PC-9 (cell line): ENCODE measurements at regions of chr9 and their contacts with region 1.

Region 1: DNA sequence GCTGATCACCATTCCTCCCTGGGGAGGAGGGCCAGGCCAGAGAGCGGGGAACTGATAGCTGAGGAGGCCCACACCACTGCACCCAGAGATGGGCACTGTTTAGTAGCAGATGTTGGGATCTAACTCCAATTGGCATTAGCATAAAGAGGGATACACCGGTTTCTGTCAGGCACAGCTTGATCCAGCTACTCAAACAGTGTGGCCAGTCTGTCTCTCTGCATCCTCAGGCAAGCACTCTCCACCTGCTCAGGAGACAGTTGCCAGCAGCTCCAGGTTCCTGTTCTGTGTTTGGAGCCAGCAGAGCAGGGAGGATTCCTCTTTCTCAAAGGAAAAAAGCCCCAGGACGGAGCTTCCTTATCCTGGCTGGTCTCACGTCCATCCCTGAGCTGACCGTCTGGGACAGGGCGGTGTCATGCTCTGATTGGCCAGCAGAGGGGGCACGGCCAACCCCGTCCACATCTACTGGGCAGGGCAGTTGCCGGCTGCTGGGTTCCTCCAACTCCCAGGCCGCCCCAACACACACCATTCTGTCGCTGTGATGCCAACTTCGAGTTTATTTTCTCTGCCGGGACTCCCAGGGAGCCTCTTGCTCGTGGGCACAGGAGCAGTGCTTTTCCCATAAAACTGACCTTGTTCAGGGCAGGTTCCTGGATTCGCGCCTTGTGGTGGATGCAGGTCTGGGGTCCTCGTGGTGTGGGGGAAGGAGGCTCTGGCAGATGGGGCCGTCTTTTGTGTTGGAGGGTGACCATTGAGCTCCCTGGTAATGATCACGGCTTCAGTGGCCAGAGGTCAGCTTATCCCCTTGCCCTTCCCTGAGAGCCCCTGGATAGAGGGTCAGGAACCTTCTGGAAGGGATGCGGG is 47.9 kb downstream of the COL5A1 start:
- DNase-seq: peak in 1 of 2 experiments; percentile 73
- H3K4me3 ChIP-seq: no peak overlapping the region
- H3K27ac ChIP-seq: no peak overlapping the region
- H3K4me1 ChIP-seq: no peaks in the 10 kb centered on the region
- H3K27me3 ChIP-seq: peaks cover 58% of the 10 kb centered on the region
- CTCF ChIP-seq: peak; percentile 80

Region 2: DNA sequence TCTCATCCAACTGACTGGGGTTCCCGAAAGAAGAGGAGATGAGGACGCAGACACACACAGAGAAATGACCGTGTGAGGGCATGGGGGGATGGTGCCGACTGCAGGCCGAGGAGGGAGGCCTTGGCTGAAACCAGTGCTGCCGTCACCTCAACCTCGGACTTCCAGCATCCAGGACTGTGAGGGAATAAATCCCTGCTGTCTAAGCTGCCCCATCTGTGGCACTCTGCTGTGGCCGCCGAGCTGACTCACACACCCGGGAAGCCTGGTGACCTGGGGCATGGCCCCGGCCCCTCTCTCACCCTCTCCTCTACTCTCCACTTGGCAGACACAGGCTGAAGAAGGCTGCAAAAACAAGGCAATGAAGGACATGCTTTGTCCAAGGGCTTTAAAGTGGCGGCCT is 52.3 kb before region 1 on chr9:
- CTCF ChIA-PET with region 1: no interaction called
- POLR2A ChIA-PET with region 1: no interaction called
- intact Hi-C with region 1: no loop called
- DNase-seq: no peak
- H3K4me3 ChIP-seq: no peak overlapping the region
- H3K27ac ChIP-seq: no peak overlapping the region
- H3K4me1 ChIP-seq: no peaks in the 10 kb centered on the region
- H3K27me3 ChIP-seq: peaks cover 59% of the 10 kb centered on the region
- CTCF ChIP-seq: no peak

Region 3: GRCh38 chr9:134783699-134784039 is 94.1 kb after region 1 on chr9:
- CTCF ChIA-PET with region 1: no interaction called
- POLR2A ChIA-PET with region 1: no interaction called
- intact Hi-C with region 1: no loop called
- DNase-seq: no peak
- H3K4me3 ChIP-seq: no peak overlapping the region
- H3K27ac ChIP-seq: no peak overlapping the region
- H3K4me1 ChIP-seq: no peaks in the 10 kb centered on the region
- H3K27me3 ChIP-seq: peaks cover 93% of the 10 kb centered on the region
- CTCF ChIP-seq: no peak

Region 4: DNA sequence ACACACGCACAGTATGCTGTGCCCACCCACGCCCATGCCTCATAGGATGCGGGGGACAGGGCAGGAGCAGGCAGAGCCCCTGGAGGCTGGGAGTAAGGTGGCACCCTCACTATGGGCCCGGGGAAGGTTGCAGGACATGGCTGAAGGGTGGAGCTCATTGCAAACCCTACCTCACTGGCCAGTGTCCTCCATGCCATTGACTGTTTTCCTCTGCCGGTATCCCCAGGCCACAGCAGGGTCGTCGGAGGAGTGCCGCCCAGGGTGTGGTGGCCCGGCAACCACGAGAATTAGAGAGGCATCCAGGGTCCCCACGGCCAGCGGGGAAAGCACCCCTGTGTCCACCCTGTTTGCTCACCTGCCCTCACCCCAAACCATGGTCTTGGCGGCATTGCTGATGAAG is 131.3 kb after region 1 on chr9:
- CTCF ChIA-PET with region 1: interaction called, 16 read pairs
- POLR2A ChIA-PET with region 1: no interaction called
- intact Hi-C with region 1: no loop called
- DNase-seq: no peak
- H3K4me3 ChIP-seq: no peak overlapping the region
- H3K27ac ChIP-seq: no peak overlapping the region
- H3K4me1 ChIP-seq: no peaks in the 10 kb centered on the region
- H3K27me3 ChIP-seq: peaks cover 89% of the 10 kb centered on the region
- CTCF ChIP-seq: no peak